ENCODE measurements at regions of chr3 and their contacts with region 1.

Region 1: DNA sequence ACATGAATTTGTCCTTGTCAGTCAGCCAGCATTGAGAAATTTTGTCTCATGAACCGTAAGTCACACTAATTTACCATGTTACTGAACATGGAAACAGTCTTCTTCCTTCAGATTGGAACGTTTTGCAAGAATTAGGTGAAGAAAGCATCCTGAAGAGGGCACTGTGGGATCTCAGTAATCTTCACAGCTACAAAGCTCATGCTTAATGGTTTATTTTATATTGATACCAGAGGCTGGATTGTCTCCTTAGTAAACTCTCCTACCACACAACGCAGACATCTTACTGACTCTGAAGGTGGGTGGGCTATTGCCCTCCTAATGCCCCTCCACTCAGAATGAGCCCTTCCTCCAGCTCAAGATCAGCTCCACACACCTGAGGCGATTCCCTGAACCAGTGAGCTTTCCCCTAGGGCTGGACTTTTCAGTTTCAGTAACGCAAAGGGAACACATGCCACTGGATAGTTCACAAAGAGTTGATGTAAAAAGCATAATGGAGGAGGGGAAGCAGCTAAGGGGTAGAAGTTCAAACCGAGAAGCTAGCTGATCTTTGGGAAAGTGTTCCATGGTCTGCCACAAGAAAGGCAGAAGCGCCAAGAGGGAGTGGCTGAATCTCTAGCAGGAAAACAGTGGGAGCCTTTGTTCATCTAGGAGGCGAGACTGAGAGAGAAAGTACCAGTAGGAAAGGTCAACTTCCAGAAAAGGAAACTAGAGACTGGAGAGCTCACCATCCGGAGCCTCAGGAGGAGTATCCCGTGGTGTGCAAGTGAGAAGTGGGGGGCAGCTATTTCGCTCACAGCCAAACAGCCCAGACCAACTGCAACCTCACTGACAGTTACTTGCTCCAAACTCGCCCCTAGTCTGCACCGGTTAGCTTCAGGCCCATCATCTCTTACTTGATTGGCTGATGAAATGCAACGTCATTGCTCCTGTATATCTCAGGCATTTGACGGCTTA is at the start of gene SLC9C1:
- H3K4me3 ChIP-seq: no peak within 1 kb of the TSS
- H3K27ac ChIP-seq: no peak within 1 kb of the TSS
- H3K4me1 ChIP-seq: no peaks in the 10 kb centered on the region
- CTCF ChIP-seq: peak; percentile 25; the same call in 1 of the 2 replicates

Region 2: GRCh38 chr3:112308151-112308911 is 14.7 kb after region 1 on chr3:
- CTCF ChIA-PET with region 1: interaction called, 11 read pairs
- POLR2A ChIA-PET with region 1: no interaction called
- H3K4me3 ChIP-seq: no peak overlapping the region
- H3K27ac ChIP-seq: no peak overlapping the region
- H3K4me1 ChIP-seq: no peaks in the 10 kb centered on the region
- CTCF ChIP-seq: no peak